ENCODE measurements at regions of chr6 and their contacts with region 1.

Region 1: DNA sequence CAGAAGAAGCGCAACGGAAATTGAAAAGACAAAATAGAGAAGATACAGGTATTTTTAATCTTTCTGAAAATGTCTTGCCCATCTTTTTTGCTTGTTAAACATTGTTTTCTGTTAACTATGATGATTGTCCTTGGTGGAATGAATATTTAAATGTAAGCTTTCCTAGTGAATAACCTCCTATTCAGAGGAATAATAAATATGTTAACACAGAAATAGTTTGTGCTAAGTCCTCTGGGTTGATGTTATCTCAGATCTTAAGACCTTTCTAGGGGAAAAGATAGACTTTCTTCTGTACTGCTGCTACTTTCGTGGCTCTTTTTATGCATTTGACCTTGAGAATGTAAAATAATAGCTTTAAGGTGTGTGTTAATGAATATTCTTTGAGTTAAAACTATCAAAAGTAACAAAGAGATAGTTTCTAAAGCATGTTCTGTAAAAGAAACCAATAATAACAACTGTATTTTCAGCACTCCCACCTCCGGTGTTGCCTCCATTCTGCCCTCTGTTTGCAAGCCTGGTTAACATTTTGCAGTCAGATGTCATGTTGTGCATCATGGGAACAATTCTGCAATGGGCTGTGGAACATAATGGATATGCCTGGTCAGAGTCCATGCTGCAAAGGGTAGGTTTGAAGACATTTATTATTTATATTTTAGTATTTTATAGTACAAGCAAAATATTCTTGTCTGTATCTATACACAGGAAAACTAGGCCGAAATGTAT is 70.2 kb downstream of the PRPH2 start:
- DNase-seq: no peak
- H3K4me3 ChIP-seq: no peak overlapping the region
- H3K27ac ChIP-seq: no peak overlapping the region
- H3K4me1 ChIP-seq: no peaks in the 10 kb centered on the region
- H3K27me3 ChIP-seq: no peaks in the 10 kb centered on the region
- CTCF ChIP-seq: no peak

Region 2: DNA sequence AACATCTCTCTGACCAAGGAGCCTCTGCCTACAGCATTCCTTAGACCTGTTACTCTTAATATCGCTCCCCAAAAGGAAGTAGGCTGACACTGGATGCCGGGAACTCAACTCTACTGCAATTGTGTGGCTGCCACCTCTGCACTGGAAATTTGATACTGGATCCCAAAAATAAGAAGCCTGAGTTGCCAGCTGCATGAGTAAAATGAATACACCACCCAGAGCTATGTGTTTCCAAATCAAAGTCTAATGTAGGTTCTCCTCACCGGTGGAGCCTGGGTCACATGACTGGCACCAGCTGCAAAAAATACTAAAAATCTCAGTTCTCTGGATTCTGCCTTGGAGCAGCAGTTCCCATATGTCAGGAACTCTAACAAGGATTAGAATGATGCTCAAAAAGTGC is 1650.0 kb before region 1 on chr6:
- intact Hi-C with region 1: no loop called
- DNase-seq: no peak
- H3K4me3 ChIP-seq: no peak overlapping the region
- H3K27ac ChIP-seq: no peak overlapping the region
- H3K4me1 ChIP-seq: no peaks in the 10 kb centered on the region
- H3K27me3 ChIP-seq: peaks cover 0 to 7% of the 10 kb centered on the region in 2 donors
- CTCF ChIP-seq: no peak

Region 3: GRCh38 chr6:42629845-42630244 is 22.3 kb before region 1 on chr6:
- intact Hi-C with region 1: loop called (anchors 2 kb)
- DNase-seq: no peak
- H3K4me3 ChIP-seq: no peak overlapping the region
- H3K27ac ChIP-seq: no peak overlapping the region
- H3K4me1 ChIP-seq: no peaks in the 10 kb centered on the region
- H3K27me3 ChIP-seq: no peaks in the 10 kb centered on the region
- CTCF ChIP-seq: no peak

Measured in tibial artery (tissue), 4 donors.